ENCODE measurements at regions of chr4 and their contacts with region 1.

Region 1: GRCh38 chr4:153466081-153466948 is at the start of gene TMEM131L:
- DNase-seq: peak; percentile 44 to 60
- ATAC-seq: peak; percentile 87 to 91
- H3K4me3 ChIP-seq: peak within 1 kb of the TSS; percentile 71
- H3K27ac ChIP-seq: peak within 1 kb of the TSS; percentile 82 to 96
- H3K4me1 ChIP-seq: peaks cover 14% of the 10 kb centered on the region; the same call in 2 of the 3 replicates
- CTCF ChIP-seq: no peak
- EP300 ChIP-seq: no peak
- POLR2A ChIP-seq: peak; percentile 64
- RAD21 ChIP-seq: no peak; a peak in 1 of 5 replicates
- polyA plus RNA-seq, gene TMEM131L: 5.0 and 6.3 TPM in 2 replicates

Region 2: DNA sequence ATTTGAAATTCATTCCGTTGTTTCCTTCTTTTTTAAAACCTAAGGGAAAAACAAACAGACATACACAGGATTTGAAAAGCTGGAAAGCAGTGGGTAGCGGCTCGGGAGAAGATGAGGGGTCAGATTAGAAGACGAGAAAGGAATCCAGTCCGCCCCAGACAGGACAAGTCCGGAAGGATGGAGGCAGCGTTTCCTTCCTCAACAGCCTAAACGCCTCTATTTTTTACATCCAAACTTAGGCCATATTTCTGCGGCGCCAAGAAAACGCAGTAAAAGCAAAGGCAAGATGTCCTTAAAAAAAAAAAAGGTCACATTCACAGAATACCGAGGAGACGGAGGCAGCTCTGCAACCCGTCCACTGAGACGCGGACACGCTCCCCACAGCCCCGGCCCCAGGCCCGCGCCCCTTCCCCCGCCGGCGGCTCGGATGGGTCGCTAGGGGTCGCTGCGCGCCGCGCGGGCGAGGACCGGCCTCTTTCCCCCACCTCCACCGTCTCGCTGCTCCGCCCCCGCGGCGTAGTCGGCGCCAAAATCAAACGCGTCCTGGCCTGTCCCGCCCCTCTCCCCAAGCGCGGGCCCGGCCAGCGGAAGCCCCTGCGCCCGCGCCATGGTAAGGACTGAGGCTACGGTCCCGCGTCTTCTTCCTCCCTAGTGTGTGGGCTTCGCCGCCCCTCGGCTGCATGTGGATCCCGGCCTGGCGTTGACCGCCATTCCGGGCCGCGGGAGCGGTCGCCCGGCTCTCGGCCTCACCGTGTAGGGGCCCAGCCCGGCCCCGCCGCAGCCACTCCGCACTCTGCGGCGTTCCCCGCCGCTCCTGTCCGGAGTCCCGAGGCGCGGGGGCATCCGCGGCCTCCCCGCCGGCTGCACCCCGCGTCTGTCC is 121.9 kb before region 1 on chr4 and contains the start of gene MND1:
- CTCF ChIA-PET with region 1: interaction called, 13 read pairs
- POLR2A ChIA-PET with region 1: interaction called, 9 read pairs
- DNase-seq: peak; percentile 66 to 80
- ATAC-seq: peak; percentile 90 to 96
- H3K4me3 ChIP-seq: peak within 1 kb of the TSS; percentile 96
- H3K27ac ChIP-seq: peak within 1 kb of the TSS; percentile 86 to 94
- H3K4me1 ChIP-seq: peaks cover 19% of the 10 kb centered on the region; the same call in 2 of the 3 replicates
- CTCF ChIP-seq: peak; percentile 84
- EP300 ChIP-seq: no peak
- POLR2A ChIP-seq: peak; percentile 48
- RAD21 ChIP-seq: peak; percentile 64 to 92
- polyA plus RNA-seq, gene MND1: 8.3 and 16.6 TPM in 2 replicates

Measured in A549 (cell line).